WTC11 (cell line): ENCODE measurements at regions of chr12 and their contacts with region 1.

Region 1: GRCh38 chr12:26629864-26630263 is 203.1 kb downstream of the ITPR2 start:
- DNase-seq: no peak
- ATAC-seq: peak; percentile 36; the same call in 1 of the 2 replicates
- H3K4me3 Mint-ChIP-seq: no peak overlapping the region
- H3K27ac Mint-ChIP-seq: peak overlapping the region; percentile 40
- H3K4me1 Mint-ChIP-seq: peaks cover 37% of the 10 kb centered on the region
- H3K27me3 Mint-ChIP-seq: no peaks in the 10 kb centered on the region
- CTCF ChIP-seq: no peak

Region 2: DNA sequence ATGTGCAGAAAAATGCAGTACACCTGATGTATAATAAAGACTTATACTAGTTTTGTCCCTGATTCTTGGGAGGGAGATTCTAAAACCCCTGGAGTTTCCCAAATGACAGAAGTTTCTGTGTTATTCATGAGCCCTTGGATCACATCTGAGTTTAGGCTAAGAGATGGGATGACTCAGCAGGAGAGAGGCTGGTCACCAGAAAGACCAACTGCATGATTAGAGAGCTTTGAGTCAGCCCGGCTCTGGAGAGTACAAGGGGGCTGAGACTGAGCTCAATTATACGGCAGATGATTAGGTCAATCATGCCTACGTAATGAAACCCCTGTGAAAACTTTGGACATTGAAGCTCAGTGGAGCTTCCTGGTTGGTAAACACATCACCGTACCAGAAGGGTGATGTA is 260.3 kb before region 1 on chr12:
- CTCF ChIA-PET with region 1: no interaction called
- POLR2A ChIA-PET with region 1: no interaction called
- DNase-seq: no peak
- ATAC-seq: peak; percentile 62
- H3K4me3 Mint-ChIP-seq: no peak overlapping the region
- H3K27ac Mint-ChIP-seq: no peak overlapping the region
- H3K4me1 Mint-ChIP-seq: no peaks in the 10 kb centered on the region
- H3K27me3 Mint-ChIP-seq: no peaks in the 10 kb centered on the region
- CTCF ChIP-seq: no peak

Region 3: GRCh38 chr12:26493656-26494055 is 136.2 kb before region 1 on chr12:
- CTCF ChIA-PET with region 1: no interaction called
- POLR2A ChIA-PET with region 1: no interaction called
- DNase-seq: no peak
- ATAC-seq: no peak
- H3K4me3 Mint-ChIP-seq: no peak overlapping the region
- H3K27ac Mint-ChIP-seq: no peak overlapping the region
- H3K4me1 Mint-ChIP-seq: peaks cover 4% of the 10 kb centered on the region
- H3K27me3 Mint-ChIP-seq: no peaks in the 10 kb centered on the region
- CTCF ChIP-seq: no peak

Region 4: DNA sequence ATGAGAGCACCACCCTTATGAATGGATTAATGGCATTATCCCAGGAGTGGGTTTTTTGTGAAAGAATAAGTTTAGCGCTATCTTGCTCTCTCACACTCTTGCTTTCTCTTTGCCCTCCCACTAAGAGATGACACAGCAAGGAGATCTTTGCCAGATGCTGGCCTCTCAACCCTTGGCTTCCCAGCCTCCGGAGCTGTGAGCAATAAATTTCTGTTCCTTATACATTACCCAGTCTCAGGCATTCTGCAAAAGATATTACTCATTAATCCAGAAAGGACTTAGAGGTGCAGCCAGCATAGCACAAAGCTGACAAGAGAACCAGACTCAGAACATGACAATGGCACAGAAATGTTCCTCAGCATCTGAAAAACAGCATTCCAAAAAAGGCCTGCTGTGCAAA is 12.5 kb after region 1 on chr12:
- CTCF ChIA-PET with region 1: interaction called, 13 read pairs
- POLR2A ChIA-PET with region 1: no interaction called
- DNase-seq: no peak
- ATAC-seq: no peak
- H3K4me3 Mint-ChIP-seq: no peak overlapping the region
- H3K27ac Mint-ChIP-seq: no peak overlapping the region
- H3K4me1 Mint-ChIP-seq: peaks cover 29% of the 10 kb centered on the region
- H3K27me3 Mint-ChIP-seq: no peaks in the 10 kb centered on the region
- CTCF ChIP-seq: no peak

Region 5: DNA sequence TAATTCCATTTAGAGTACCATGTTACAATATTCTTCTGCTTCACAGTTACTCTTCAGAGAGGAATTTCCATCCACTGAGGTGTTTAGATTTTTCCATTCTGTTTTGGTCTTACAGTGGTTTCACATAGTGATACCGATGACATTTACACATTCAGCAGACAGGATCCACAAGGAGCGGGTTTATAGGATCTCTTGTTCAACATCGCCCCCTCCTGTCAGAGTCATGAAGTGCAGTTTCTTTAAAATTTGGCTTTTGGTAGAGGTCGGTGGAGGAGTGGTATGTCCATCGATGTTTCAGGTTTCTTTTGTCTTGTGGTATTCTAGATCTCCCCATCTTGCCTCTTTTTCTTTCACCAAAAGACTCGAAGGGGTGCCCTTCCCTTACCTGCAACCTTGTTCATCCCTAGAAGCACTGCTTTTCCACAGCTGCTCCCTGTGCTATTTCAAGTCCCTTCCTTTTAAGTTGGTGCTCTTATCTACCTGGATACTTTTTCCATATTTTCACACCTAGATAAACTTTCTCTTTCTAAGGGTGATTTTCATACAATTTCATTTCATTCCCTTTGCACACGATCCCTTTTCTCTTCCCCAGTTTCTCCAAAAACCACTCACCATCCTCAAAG is 21.8 kb after region 1 on chr12:
- CTCF ChIA-PET with region 1: interaction called, 20 read pairs
- POLR2A ChIA-PET with region 1: no interaction called
- DNase-seq: peak; percentile 75
- ATAC-seq: peak; percentile 94
- H3K4me3 Mint-ChIP-seq: no peak overlapping the region
- H3K27ac Mint-ChIP-seq: peak overlapping the region; percentile 61
- H3K4me1 Mint-ChIP-seq: peaks cover 22% of the 10 kb centered on the region
- H3K27me3 Mint-ChIP-seq: no peaks in the 10 kb centered on the region
- CTCF ChIP-seq: peak; percentile 83

Region 6: DNA sequence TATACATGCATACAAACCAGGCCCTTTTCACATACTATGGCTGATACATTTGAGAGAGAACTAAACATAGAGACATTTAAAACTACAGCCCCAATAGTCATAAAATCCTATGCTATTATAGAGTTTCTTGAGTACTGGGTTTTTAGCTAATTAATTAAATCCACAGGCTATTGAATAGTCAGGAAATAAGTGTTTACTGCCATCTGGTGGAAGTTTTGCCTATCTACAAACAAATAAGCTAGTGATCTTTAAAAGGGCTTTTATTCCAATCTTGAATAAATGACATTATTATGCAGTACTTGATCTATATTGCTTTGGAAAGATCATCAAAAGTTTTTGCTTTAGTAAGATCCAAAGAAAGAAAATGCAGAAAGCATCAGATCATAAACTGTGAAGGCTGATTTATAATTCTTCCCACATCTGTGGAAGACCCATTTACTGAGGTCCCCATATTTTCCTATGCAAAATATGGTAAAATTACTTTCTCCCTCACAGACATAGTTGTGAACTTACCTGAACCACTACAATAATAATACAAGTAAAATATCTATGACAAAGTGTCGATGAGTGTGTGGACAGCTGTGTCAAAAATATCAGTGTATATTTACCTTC is 71.8 kb after region 1 on chr12:
- CTCF ChIA-PET with region 1: interaction called, 20 read pairs
- POLR2A ChIA-PET with region 1: no interaction called
- DNase-seq: no peak
- ATAC-seq: peak; percentile 46
- H3K4me3 Mint-ChIP-seq: no peak overlapping the region
- H3K27ac Mint-ChIP-seq: no peak overlapping the region
- H3K4me1 Mint-ChIP-seq: peaks cover 30% of the 10 kb centered on the region
- H3K27me3 Mint-ChIP-seq: no peaks in the 10 kb centered on the region
- CTCF ChIP-seq: peak; percentile 42